Tibial artery (tissue), 4 donors: ENCODE measurements at regions of chr12 and their contacts with region 1.

Region 1: DNA sequence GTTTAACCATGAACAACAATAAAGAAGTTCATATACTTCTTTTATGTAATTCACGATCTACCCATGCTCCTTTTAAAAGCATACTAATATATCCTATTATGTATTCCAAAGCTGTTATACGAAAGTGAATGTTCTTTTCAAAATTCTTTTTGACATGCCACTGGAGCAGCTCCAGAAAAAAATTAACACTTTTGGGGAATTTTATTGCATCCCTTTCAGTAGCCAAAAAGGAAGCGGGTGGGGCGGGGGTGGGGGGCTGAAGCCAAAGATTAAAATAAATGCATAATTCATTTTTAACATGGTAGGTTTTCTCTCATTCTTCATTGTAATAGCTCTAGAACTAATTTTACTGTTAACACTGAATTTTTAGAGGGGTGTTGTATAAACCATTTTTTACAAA is 123.0 kb downstream of the ANKS1B start:
- DNase-seq: no peak
- H3K4me3 ChIP-seq: no peak overlapping the region
- H3K27ac ChIP-seq: no peak overlapping the region
- H3K4me1 ChIP-seq: peaks cover 0 to 43% (median 3%) of the 10 kb centered on the region in 4 donors
- H3K27me3 ChIP-seq: no peaks in the 10 kb centered on the region
- CTCF ChIP-seq: no peak

Region 2: DNA sequence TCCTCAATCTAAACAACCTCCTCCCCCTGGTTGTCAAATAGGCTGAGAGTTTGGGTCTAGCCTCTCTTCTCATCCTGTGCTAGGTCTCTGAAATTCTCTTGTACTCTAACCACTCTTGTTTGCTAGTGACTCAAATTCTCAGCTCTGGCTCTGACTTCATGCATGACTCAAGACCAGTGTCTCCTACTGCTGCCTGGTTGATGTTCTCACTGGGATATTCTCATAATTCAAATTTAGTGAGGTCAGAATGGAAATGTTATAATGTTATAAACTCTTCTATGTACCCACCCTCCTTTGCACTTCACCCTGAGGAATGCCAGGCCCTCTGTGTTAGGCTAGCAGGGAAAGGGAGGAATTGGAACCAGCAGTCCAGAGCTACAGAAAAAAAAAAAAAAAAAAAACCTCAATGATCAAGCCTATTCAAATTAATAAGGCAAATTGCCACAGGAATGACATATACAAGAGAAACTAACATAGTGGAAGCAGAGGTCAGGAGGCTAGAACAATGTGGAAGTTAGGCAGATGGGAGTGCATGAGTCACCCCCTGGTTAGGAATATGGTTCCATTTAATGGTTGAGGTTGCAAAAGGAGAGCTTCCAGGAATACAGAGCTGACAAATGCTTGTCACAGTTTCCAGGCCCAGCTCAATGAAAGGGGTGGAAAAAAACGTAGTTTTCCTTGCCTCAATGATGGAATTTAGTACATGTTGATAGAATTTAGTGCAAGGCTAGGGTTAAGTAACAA is 1939.6 kb before region 1 on chr12:
- intact Hi-C with region 1: no loop called
- DNase-seq: peak in 1 of 2 donors; percentile 39
- H3K4me3 ChIP-seq: no peak overlapping the region
- H3K27ac ChIP-seq: peak overlapping the region; percentile 46 to 55
- H3K4me1 ChIP-seq: peaks cover 0 to 10% (median 5%) of the 10 kb centered on the region in 4 donors
- H3K27me3 ChIP-seq: no peaks in the 10 kb centered on the region
- CTCF ChIP-seq: no peak

Region 3: DNA sequence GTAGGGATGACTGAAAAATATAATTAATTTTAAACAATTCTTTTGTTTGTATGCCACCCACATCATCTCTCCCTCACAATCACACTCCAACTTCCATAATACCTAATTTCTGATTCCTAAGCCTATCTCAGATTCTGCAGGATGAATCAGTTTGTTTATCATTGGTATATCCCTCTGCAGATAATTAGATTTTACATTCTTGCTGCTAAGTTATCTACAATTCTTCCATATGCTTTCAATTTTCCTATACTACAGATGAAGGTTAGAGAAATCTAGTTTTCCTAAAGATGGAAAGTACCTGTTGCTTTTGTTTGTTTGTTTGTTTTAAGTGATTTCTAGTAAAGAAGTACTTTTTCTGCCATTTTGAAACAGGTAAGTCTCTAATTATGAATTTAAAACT is 17.7 kb after region 1 on chr12:
- intact Hi-C with region 1: loop called (anchors 2 kb)
- DNase-seq: no peak
- H3K4me3 ChIP-seq: no peak overlapping the region
- H3K27ac ChIP-seq: no peak overlapping the region
- H3K4me1 ChIP-seq: peaks cover 0 to 9% (median under 1%) of the 10 kb centered on the region in 4 donors
- H3K27me3 ChIP-seq: no peaks in the 10 kb centered on the region
- CTCF ChIP-seq: no peak